ENCODE measurements at regions of chr17 and their contacts with region 1.

Region 1: DNA sequence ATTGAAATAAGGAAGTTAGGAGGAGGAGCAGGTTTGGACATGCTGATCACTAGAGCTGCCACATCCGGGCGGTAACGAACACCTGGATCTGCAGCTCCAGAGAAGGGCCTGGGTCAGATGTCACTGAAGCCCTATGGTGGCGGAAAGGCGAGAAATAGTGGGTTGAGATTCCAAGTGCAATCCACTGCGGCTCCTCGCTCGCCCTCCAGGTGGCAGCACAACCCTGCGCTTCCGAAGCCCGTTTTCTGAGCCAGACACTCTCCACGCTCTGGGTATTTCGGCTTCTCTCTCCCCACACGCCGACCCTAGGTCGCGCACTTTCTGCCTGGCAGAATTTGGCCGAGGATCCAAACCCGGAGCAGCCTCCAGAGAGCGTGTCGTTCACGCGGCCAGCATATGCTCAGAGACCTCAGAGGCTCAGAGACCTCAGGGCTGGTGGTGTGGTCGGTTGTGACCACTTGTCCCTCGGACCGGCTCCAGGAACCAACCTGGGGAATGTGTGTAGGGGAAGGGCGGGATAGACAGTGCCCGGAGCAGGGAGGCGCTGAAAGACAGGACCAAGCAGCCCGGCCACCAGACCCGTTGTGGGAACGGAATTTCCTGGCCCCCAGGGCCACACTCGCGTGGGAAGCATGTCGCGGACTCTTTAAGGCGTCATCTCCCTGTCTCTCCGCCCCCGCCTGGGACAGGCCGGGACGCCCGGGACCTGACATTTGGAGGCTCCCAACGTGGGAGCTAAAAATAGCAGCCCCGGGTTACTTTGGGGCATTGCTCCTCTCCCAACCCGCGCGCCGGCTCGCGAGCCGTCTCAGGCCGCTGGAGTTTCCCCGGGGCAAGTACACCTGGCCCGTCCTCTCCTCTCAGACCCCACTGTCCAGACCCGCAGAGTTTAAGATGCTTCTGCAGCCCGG is 744 bp upstream of the SLC2A4 start:
- DNase-seq: peak; percentile 86

Region 2: DNA sequence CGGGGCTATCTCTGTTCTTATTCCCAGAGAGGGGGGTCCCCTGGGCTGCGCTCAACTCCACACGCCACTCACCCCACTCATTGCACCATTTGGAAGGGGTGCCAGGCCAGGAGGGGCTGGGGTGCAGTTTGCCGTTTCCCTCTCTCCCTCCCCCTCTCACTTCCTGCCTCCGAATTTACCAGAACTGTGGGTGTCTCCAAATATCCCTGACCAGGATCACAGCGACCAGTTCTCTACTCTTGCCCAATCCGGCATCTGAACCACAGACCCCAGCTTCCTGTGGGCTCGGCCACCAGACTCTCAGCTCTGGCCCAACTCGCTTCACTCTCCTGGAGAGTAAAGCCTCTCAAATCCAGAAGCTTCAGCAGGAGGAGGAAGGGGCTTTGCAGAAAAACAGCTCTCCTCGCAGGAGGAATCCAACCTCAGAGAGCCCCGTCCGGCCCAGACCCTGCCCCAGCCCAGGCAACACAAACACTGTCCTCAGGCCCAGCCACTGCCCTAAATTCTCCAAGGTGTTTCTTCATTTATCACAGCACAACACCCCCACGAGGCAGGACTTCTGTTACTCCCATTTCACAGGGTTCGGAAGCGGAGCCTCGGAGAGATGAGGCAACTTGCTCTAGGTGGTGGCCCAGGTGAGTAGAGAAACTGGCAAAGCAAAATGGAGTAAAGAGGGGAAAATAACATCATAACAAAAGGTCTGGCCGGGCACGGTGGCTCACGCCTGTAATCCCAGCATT is 165.7 kb before region 1 on chr17:
- CTCF ChIA-PET with region 1: no interaction called
- POLR2A ChIA-PET with region 1: no interaction called
- DNase-seq: no peak

Region 3: GRCh38 chr17:7296189-7296902 is 15.6 kb after region 1 on chr17:
- CTCF ChIA-PET with region 1: interaction called, 22 read pairs
- POLR2A ChIA-PET with region 1: interaction called, 8 read pairs
- DNase-seq: peak; percentile 92

Region 4: GRCh38 chr17:7322520-7323194 is 41.9 kb after region 1 on chr17:
- CTCF ChIA-PET with region 1: no interaction called
- POLR2A ChIA-PET with region 1: no interaction called
- DNase-seq: no peak